ENCODE measurements at regions of chr12 and their contacts with region 1.

Region 1: DNA sequence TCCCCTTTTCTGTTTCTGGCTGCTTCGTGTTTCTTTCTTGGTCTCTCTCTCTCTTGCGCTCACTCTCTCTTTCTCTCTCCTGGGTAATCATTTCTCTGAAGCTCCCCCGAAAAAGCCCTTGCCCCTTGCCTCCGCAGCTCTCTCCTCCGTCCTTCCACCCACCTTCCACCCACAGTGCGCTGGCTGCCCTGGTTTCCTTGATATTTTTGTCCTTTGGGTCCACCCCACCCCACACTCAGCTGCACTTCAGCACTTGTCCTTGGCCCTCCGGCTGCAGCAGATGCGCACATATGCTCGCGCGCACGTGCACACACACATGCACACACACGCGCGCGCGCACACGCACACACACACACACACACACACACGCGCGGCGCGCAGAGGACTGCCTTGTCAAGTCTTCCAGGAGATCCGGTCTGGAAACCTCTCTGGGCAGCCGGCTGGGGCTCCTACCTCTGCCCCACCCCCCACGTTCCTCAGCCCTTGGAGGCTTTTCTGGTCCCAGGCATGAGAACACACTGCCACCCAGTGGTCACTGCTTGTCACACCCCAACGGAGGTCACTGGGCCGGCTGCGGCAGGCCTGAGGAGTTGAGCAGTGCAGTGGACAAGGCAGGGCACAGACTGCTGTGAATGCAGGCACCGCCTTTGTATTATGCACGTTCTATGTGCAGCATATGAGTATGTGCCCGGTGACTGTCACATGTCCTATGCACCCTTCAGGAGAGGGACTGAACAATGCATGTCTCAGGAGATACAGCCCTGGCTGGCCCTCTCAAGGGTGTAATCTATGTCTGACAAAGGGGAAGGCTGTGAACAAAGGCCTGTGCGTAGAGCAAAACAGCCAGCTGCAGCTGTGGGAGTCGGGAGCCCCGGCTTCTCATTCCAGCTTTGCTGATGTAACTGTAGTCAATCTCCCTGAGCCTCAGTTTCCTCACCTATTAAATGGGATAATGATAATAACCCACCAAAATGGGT is 6.5 kb downstream of the LAG3 start:
- DNase-seq: peak; percentile 94
- H3K4me3 ChIP-seq: peak overlapping the region; percentile 65
- H3K27ac ChIP-seq: no peak overlapping the region
- H3K4me1 ChIP-seq: peaks cover 43% of the 10 kb centered on the region
- CTCF ChIP-seq: peak; percentile 98

Region 2: GRCh38 chr12:6423267-6424007 is 355.4 kb before region 1 on chr12:
- CTCF ChIA-PET with region 1: no interaction called
- POLR2A ChIA-PET with region 1: no interaction called
- intact Hi-C with region 1: loop called (anchors 1 kb)
- DNase-seq: peak; percentile 92
- H3K4me3 ChIP-seq: no peak overlapping the region
- H3K27ac ChIP-seq: peak overlapping the region; percentile 1
- H3K4me1 ChIP-seq: peaks cover 53% of the 10 kb centered on the region
- CTCF ChIP-seq: peak; percentile 93

Region 3: DNA sequence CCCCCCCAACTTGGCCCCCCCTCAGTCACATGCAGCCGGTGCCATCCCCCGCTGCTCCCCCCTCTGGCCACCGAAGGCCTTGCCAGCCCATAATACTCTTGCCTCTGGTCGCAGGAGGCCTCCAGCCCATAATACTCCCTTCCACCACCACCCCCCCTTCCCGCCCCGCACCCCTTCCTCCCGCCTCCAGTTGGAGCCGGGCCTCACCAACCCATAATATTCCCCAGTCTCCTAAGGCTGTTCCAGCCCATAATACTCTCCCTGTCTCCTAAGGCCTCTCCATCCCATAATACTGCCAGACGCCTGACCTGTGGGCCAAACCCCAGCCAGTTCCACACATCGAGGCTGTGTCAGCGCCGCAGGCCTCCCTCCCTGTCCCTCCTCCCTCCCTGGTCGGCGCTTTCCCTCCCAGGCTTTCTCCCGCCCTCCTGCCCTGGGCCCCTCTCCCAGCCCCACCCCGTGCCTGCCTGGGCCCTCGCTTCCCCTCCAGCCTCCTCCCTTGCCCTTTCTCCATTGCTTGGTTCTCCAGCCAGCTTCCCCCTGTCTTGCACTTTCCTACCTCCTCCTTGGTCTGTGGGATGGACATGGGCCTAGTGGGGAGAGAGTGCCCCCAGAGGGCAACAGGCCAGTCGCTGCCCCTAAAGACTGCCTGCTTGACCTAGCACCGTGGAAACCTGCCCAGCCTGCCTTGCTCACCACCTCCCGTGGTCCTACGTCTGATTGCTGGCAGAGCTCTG is 164.9 kb before region 1 on chr12:
- CTCF ChIA-PET with region 1: no interaction called
- POLR2A ChIA-PET with region 1: no interaction called
- intact Hi-C with region 1: loop called (anchors 1 kb)
- DNase-seq: peak; percentile 42
- H3K4me3 ChIP-seq: no peak overlapping the region
- H3K27ac ChIP-seq: peak overlapping the region; percentile 18
- H3K4me1 ChIP-seq: peaks cover 36% of the 10 kb centered on the region
- CTCF ChIP-seq: peak; percentile 48; the same call in 1 of the 2 replicates

Region 4: DNA sequence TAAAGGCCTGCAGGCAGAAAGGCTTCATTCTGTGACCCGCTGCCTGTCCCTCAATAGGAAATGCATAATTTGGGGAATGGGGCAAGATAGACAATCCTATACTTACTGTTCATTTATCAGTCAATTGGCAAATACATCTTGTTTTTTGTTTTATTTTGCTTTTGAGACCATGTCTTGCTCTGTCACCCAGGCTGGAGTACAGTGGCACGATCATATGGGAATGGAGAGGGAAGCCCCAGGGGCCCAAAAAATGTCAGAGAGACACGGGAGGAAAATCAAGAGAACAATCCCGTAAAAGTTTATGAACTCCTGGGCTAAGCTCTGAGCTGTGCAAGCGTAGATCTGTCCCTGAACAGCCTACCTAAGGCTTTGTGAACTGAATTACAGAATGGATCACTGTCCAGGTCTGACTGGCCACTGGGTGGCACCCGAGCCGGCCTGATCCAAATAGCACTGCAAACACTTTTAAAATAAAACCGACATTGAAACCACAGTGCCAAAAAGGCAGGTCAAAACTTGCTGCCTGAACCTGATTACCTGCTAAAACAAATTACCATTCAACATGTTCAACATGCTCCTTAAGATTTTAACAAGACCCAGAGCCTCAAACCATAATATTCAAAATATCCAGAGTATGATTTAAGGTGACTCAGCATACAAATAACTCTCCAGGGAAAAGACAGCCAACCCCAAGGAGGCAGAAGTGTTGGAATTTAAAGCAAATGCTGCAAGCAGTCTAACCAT is 43.2 kb before region 1 on chr12:
- CTCF ChIA-PET with region 1: no interaction called
- POLR2A ChIA-PET with region 1: no interaction called
- intact Hi-C with region 1: loop called (anchors 1 kb)
- DNase-seq: peak; percentile 39
- H3K4me3 ChIP-seq: no peak overlapping the region
- H3K27ac ChIP-seq: no peak overlapping the region
- H3K4me1 ChIP-seq: peaks cover under 1% of the 10 kb centered on the region
- CTCF ChIP-seq: peak; percentile 76

Region 5: DNA sequence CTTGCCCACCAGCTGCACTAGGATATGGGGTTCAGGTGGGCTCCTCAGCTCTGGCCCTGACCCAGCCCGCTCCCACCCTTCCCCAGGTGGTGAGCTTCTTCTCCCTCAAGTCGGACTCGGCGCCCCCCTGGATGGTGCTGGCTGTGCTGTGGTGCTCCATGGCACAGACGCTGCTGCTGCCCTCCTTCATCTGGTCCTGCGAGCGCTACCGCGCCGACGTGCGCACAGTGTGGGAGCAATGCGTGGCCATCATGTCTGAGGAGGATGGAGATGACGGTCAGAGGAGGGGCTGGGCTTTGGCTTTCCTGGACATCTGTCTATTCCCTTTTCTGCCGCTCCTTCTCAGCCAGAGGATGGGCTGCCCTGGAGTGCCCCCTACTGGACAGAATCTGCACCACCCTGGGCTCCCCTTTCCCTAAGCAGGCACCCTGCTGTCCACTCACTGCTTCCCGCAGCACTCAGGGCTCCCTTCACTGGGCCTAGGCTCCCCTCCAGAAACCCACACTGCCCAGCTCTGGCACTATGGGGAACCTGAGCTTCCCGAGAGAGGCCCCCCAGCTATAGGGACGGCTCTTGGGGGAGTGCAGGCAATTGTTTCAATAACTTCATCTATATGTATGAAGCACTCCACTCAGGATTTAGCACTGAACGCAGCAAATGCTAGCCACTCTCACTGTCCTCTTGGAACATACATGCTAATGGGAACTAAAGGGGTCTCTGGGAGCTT is 46.7 kb after region 1 on chr12:
- CTCF ChIA-PET with region 1: interaction called, 4 read pairs
- POLR2A ChIA-PET with region 1: no interaction called
- intact Hi-C with region 1: loop called (anchors 5 kb)
- DNase-seq: peak; percentile 71
- H3K4me3 ChIP-seq: no peak overlapping the region
- H3K27ac ChIP-seq: no peak overlapping the region
- H3K4me1 ChIP-seq: peaks cover 32% of the 10 kb centered on the region
- CTCF ChIP-seq: peak; percentile 91

Region 6: DNA sequence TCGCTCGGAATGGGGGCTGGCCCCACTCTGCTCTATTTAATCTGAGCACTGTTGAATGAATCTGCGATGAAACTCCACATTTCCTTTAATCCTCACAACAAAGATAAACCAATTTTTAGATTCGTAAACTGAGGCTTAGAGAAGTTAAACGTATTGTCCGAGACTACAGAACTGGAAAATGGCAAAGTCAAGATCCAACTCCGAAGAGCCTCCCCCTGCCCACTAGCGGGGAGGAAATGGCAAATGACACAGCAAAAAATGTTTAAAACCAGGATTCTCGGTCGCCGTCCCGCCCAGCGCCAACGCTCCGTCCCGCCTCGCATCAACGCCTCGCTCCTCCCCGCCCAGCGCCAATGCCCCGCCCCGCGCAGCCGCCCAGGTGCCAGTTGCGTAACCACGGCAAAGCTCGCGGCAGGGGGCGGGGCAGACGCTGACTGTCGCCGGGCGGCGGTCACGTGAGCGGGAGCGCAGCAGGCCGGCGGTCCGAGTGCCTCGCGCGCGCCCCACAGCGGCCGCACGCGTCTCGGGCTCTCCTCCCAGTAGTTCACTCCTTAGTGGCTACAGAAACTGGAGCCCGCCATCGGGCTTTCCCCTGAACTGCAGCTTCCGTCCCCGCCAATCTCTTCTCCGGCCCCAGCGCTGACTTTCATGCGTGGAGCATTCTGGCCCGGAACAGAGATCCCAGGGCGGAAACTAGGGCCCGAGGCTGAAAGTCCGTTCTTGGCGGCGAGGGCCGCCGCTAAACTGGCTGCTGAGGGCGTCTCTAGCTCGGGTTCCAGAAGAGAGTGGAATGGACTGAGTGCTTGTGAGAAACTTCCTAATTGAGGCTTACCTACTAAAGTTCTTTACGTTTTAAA is 112.2 kb after region 1 on chr12:
- CTCF ChIA-PET with region 1: no interaction called
- POLR2A ChIA-PET with region 1: no interaction called
- intact Hi-C with region 1: no loop called
- DNase-seq: peak; percentile 98
- H3K4me3 ChIP-seq: peak overlapping the region; percentile 66
- H3K27ac ChIP-seq: peak overlapping the region; percentile 81
- H3K4me1 ChIP-seq: peaks cover 28% of the 10 kb centered on the region
- CTCF ChIP-seq: peak; percentile 82

Measured in OCI-LY7 (cell line).